Calu3 (cell line): ENCODE measurements at regions of chr7 and their contacts with region 1.

Region 1: DNA sequence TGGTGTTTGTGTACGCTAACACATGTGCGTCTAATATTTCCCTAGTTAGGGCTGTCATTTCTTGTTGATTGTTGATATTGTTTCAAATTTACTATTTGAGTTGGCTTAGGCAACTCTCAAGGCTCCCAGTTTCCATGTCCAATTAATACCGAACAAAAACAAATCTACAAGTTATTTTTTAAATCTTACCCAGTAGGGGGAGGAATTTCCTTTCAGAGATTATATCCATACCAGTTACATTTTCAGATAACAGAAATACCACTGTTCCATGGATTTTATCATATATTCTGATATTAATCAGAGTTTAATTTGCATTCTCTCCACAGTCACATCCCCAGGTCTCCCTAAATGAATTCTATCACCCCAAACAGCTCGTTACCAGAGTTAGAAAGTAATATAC is 7.2 kb upstream of the AKR1B10 start:
- DNase-seq: no peak
- H3K4me3 Mint-ChIP-seq: no peak overlapping the region
- H3K27ac Mint-ChIP-seq: no peak overlapping the region
- H3K4me1 Mint-ChIP-seq: peaks cover 37% of the 10 kb centered on the region
- H3K27me3 Mint-ChIP-seq: no peaks in the 10 kb centered on the region
- CTCF ChIP-seq: peak; percentile 6

Region 2: GRCh38 chr7:134420424-134421125 is 99.6 kb before region 1 on chr7:
- CTCF ChIA-PET with region 1: no interaction called
- intact Hi-C with region 1: no loop called
- DNase-seq: peak; percentile 77
- H3K4me3 Mint-ChIP-seq: peak overlapping the region; percentile 29
- H3K27ac Mint-ChIP-seq: peak overlapping the region; percentile 2
- H3K4me1 Mint-ChIP-seq: peaks cover 34% of the 10 kb centered on the region
- H3K27me3 Mint-ChIP-seq: no peaks in the 10 kb centered on the region
- CTCF ChIP-seq: peak; percentile 58

Region 3: GRCh38 chr7:134533288-134533771 is 13.2 kb after region 1 on chr7:
- CTCF ChIA-PET with region 1: no interaction called
- intact Hi-C with region 1: no loop called
- DNase-seq: no peak
- H3K4me3 Mint-ChIP-seq: peak overlapping the region; percentile 45
- H3K27ac Mint-ChIP-seq: peak overlapping the region; percentile 1
- H3K4me1 Mint-ChIP-seq: peaks cover 55% of the 10 kb centered on the region
- H3K27me3 Mint-ChIP-seq: no peaks in the 10 kb centered on the region
- CTCF ChIP-seq: no peak

Region 4: DNA sequence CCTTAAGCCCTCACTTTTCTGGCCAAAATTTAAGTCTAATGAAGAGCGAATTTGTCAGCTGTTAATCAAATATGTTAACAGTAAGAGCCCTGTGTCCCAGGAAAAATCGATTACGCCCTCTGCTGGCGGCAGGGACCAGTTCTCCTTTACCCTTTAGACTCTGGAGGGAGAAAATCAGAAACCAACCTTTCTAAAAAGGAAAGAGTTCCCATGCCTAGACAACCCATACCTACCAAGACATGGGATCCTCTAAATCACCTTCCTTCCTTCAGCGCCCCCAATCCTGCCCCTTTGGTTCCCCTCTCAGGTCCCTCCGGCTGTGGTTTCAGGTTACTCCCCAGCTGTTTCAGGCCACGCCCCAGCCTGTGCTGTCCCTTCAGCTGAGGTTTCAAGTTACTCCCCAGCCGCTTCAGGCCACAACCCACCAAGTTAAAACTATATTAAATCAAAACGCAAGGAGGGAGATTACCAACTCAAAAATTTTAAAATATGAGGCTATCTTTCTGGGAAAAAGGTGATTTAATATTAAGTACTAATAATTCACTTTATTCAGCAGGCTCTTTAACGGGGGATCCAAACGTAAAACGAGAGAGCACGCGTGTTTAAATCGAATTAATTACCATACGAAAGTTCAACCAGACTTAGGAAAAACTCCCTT is 27.4 kb after region 1 on chr7:
- CTCF ChIA-PET with region 1: interaction called, 10 read pairs
- intact Hi-C with region 1: loop called (anchors 1 kb)
- DNase-seq: peak; percentile 83
- H3K4me3 Mint-ChIP-seq: peak overlapping the region; percentile 64
- H3K27ac Mint-ChIP-seq: peak overlapping the region; percentile 54
- H3K4me1 Mint-ChIP-seq: peaks cover 24% of the 10 kb centered on the region
- H3K27me3 Mint-ChIP-seq: no peaks in the 10 kb centered on the region
- CTCF ChIP-seq: peak; percentile 92

Region 5: DNA sequence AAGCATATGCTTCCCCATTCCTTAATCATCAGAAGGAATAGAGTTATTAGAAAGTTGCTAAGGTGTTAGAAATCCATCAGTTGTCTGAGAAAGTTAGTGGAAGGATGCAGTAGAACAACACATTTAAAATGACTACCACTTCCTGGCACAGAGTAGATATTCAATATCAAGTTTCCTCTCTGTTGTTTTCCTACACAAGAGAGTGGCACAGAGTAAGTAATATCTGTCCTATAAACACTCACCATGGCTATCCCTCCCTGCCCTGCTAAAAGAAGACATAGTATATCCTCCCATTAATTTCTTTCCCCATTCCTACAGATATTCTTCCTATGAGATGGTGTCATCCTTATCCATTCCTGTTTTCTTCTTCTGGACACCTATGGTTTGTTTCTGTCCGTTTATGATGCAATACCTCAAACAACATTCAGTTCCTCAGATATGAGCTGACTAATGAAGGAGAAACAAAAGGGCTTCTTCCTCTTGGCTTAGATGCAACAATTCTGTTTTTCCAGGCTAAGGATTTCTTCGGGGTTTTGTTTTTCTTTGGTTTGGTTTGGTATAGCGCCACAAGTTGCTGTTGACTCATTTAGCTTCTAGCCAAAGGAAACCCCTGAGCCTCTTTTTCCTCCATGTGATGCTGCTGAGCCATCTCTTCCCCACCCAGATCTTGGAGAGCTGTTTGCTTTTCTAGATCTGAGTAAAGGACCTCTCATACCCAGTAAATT is 93.7 kb after region 1 on chr7:
- CTCF ChIA-PET with region 1: no interaction called
- intact Hi-C with region 1: no loop called
- DNase-seq: peak; percentile 8
- H3K4me3 Mint-ChIP-seq: no peak overlapping the region
- H3K27ac Mint-ChIP-seq: peak overlapping the region; percentile 43
- H3K4me1 Mint-ChIP-seq: peaks cover 12% of the 10 kb centered on the region
- H3K27me3 Mint-ChIP-seq: peaks cover 20% of the 10 kb centered on the region
- CTCF ChIP-seq: no peak

Region 6: DNA sequence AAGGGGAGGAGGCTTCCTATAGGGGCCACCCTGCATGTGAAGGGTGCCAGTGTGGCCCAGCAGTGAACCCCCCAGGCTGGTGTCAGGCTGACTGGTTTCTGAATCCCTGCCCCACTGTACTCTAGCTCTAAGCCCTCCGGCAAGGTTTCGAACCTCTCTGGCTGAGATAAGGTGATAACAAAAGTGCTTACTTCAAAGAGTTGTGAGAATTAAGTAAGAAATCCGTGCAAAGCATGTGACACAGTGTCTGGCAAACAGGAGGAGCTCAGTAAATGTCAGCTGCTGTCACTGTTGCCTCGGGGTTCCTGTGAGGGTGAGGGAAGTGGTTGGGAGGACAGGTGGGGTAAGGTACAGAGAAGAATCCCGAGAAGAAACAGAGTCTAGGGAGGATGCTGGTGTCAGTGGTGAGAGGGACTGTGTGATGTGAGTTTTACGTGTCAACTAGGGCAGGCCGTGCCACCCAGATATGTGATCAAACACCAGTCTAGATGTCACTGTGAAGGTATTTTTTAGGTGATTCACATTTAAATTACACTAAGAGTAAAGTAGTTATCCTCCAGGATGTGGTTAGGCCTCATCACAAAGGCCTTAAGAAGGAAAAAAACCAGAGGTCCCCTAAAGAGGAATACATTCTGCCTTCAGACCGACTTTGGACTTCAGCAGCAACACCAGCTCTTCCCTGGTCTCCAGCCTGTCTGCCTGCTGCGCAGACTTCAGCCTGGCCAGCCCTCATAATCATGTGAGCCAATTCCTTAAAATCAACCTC is 190.9 kb after region 1 on chr7:
- CTCF ChIA-PET with region 1: no interaction called
- intact Hi-C with region 1: no loop called
- DNase-seq: no peak
- H3K4me3 Mint-ChIP-seq: no peak overlapping the region
- H3K27ac Mint-ChIP-seq: no peak overlapping the region
- H3K4me1 Mint-ChIP-seq: no peaks in the 10 kb centered on the region
- H3K27me3 Mint-ChIP-seq: no peaks in the 10 kb centered on the region
- CTCF ChIP-seq: no peak

Region 7: DNA sequence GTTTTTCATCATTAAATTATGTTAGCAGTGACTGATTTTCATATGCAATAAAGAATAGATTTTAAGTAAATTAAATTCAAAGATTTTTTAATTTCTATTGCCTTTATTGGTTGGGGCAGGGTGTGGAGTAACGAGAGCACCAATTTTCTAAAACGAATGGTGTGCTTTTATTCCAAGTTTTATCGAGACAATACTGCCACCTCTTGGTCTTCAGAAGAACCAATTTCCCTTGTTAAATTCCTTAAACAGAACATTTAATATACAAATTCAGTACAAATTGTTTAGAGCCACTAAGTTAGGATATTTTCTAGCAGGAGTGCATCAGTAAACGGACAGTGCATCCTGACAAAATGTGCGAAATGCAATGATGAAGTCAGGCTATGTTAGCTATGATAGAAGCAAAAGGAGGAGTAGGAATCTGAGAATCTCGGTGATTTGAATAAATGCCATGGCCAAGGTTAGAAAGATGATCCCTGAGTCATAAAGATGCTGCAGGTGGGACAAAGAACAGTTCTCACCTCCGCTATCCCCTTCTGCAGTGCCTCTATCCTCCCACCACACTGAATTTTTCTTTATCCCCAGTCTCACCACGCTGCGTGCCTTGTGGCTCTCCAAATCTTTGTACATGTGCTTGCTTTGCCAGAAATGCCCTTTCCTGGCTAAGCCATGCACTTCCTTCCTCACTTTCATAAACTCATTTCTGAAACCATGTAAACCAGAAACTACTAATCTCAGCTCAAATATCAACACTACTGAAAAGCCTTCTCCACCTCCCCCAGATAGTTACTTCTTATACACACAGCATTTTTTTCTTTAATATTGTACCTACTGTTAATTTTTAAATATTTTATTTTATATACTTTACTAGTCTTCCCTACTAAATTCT is 434.3 kb after region 1 on chr7:
- CTCF ChIA-PET with region 1: no interaction called
- intact Hi-C with region 1: loop called (anchors 5 kb)
- DNase-seq: no peak
- H3K4me3 Mint-ChIP-seq: no peak overlapping the region
- H3K27ac Mint-ChIP-seq: no peak overlapping the region
- H3K4me1 Mint-ChIP-seq: no peaks in the 10 kb centered on the region
- H3K27me3 Mint-ChIP-seq: no peaks in the 10 kb centered on the region
- CTCF ChIP-seq: peak; percentile 29